SK-N-SH (cell line): ENCODE measurements at regions of chr2 and their contacts with region 1.

Region 1: DNA sequence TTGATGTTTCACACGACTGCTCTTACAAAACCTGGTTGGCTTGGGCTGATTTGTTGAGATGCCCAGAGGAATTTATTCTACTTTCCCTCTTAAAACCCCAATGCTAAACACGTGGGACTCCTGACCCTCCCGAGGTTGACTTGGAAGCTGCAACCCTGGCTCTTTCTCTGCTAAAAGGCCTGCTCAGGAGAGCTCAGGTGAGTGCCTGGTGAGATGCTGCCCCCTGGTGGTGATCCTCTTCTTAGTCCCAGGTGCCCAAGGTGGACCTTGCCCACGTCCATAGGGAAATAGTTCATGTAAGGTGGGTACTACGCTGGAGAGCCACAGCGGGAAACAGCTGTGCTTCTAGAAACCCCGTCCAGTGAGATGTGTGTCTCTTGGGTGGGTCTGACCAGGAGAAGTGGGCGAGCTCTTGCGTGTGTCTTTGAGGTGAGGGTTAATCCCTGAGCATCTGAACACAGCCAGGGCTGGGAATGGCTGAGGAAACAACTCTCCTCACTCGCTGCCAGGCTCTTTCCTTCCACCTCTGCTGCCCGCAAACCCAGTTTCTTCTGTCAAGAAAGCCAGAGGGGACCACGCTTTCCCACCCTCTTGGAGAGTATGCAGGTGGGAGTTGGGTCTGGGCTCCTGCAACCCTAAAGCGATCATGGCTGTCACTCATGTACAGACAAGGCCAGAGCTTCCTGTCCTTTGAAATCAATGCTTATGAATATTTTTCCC is 25.5 kb upstream of the PXDN start:
- DNase-seq: peak; percentile 93
- H3K4me3 ChIP-seq: no peak overlapping the region; a peak in 1 of 4 replicates
- H3K27ac ChIP-seq: no peak overlapping the region
- H3K4me1 ChIP-seq: no peaks in the 10 kb centered on the region; a peak in 1 of 4 replicates
- H3K27me3 ChIP-seq: no peaks in the 10 kb centered on the region
- CTCF ChIP-seq: peak; percentile 94
- EP300 ChIP-seq: no peak
- RAD21 ChIP-seq: peak; percentile 93

Region 2: GRCh38 chr2:1584691-1585485 is 185.0 kb before region 1 on chr2:
- CTCF ChIA-PET with region 1: interaction called, 82 read pairs
- POLR2A ChIA-PET with region 1: no interaction called
- DNase-seq: no peak
- H3K4me3 ChIP-seq: no peak overlapping the region
- H3K27ac ChIP-seq: no peak overlapping the region
- H3K4me1 ChIP-seq: no peaks in the 10 kb centered on the region; a peak in 1 of 4 replicates
- H3K27me3 ChIP-seq: no peaks in the 10 kb centered on the region
- CTCF ChIP-seq: 0 out of 2 replicates have a peak, but pooled peaks have one; percentile 7
- EP300 ChIP-seq: no peak
- RAD21 ChIP-seq: no peak

Region 3: DNA sequence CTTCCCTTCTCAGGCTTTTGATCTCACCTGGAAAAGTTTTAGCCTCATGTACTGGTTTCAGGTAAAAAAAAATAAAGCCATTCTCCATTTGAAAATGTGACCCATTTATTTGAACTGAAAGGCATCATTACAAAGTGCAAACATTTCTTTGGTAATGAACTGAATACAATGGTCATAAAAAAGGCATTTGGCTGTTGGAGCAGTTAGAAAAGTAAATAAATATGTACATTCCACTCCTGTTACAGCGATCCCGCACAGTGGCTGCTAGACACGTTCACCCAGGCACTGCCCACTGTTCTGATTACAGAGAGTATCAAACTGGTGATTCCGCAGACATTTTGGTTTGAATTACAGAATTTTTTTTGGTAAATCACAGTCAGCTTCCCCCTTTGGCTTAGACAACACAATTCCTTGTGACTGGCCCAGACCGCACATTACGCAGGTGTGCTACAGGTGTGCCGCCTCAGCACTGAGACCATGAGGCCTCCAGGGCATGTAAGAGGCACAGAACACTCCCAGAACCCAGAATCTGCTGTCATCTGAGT is 138.0 kb before region 1 on chr2:
- CTCF ChIA-PET with region 1: interaction called, 12 read pairs
- POLR2A ChIA-PET with region 1: no interaction called
- DNase-seq: no peak
- H3K4me3 ChIP-seq: no peak overlapping the region
- H3K27ac ChIP-seq: no peak overlapping the region
- H3K4me1 ChIP-seq: peaks cover 0 to 6% of the 10 kb centered on the region in 2 experiments; a peak in 1 of 4 replicates
- H3K27me3 ChIP-seq: no peaks in the 10 kb centered on the region
- CTCF ChIP-seq: no peak
- EP300 ChIP-seq: no peak
- RAD21 ChIP-seq: no peak

Region 4: GRCh38 chr2:1781271-1782080 is 11.6 kb after region 1 on chr2:
- CTCF ChIA-PET with region 1: interaction called, 31 read pairs
- POLR2A ChIA-PET with region 1: interaction called, 3 read pairs
- DNase-seq: no peak
- H3K4me3 ChIP-seq: no peak overlapping the region
- H3K27ac ChIP-seq: no peak overlapping the region
- H3K4me1 ChIP-seq: no peaks in the 10 kb centered on the region; a peak in 1 of 4 replicates
- H3K27me3 ChIP-seq: 0 out of 2 replicates have a peak, but pooled peaks cover 10% of the 10 kb centered on the region
- CTCF ChIP-seq: no peak
- EP300 ChIP-seq: no peak
- RAD21 ChIP-seq: no peak

Region 5: GRCh38 chr2:1802469-1803216 is 32.8 kb after region 1 on chr2:
- CTCF ChIA-PET with region 1: interaction called, 11 read pairs
- POLR2A ChIA-PET with region 1: no interaction called
- DNase-seq: no peak
- H3K4me3 ChIP-seq: no peak overlapping the region
- H3K27ac ChIP-seq: no peak overlapping the region; a peak in 1 of 4 replicates
- H3K4me1 ChIP-seq: peaks cover 0 to 5% of the 10 kb centered on the region in 2 experiments; a peak in 1 of 4 replicates
- H3K27me3 ChIP-seq: no peaks in the 10 kb centered on the region
- CTCF ChIP-seq: no peak
- EP300 ChIP-seq: no peak
- RAD21 ChIP-seq: no peak